ENCODE measurements at regions of chr14 and their contacts with region 1.

Region 1: DNA sequence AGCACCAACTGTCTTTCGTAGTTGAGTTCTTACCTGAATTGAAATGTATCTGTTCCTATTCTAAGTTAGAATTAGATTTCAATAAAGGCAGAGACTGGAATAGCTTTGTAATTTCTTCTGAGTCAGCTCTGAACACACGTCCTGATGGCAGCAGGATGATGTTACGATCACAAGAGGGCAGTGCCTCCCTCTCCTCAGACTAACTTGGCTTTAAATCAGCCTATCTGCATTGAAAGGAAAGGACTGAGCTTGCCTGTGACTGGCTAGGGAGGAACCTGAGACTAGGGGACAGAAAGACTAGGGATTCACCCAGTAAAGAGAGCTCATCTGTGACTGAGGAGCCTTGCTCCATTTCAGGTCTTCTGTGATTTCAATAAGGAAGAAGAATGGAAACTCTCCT is 323.7 kb upstream of the OR4E1 start:
- DNase-seq: peak; percentile 33 to 58 (median 52)
- H3K4me3 ChIP-seq: peak overlapping the region in 1 of 2 donors; percentile 27
- H3K4me3 Mint-ChIP-seq: peak overlapping the region; percentile 87 to 96 (median 92)
- H3K27ac ChIP-seq: peak overlapping the region; percentile 51
- H3K27ac Mint-ChIP-seq: peak overlapping the region in 6 of 7 donors; percentile 86 to 97 (median 92)
- H3K4me1 ChIP-seq: peaks cover 18% of the 10 kb centered on the region
- H3K4me1 Mint-ChIP-seq: peaks cover 5 to 15% (median 8%) of the 10 kb centered on the region in 4 donors
- H3K27me3 ChIP-seq: no peaks in the 10 kb centered on the region
- H3K27me3 Mint-ChIP-seq: no peaks in the 10 kb centered on the region

Region 2: GRCh38 chr14:22039938-22040775 is 42.9 kb after region 1 on chr14:
- CTCF ChIA-PET with region 1: interaction called, 4 read pairs
- POLR2A ChIA-PET with region 1: interaction called, 11 read pairs
- intact Hi-C with region 1: no loop called
- DNase-seq: peak; percentile 38 to 56 (median 44)
- H3K4me3 ChIP-seq: peak overlapping the region in 1 of 2 donors; percentile 14
- H3K4me3 Mint-ChIP-seq: peak overlapping the region; percentile 40 to 82 (median 78)
- H3K27ac ChIP-seq: no peak overlapping the region
- H3K27ac Mint-ChIP-seq: peak overlapping the region; percentile 30 to 92 (median 80)
- H3K4me1 ChIP-seq: no peaks in the 10 kb centered on the region
- H3K4me1 Mint-ChIP-seq: peaks cover 2 to 11% (median 4%) of the 10 kb centered on the region in 4 donors
- H3K27me3 ChIP-seq: no peaks in the 10 kb centered on the region
- H3K27me3 Mint-ChIP-seq: no peaks in the 10 kb centered on the region

Measured in CD4-positive, alpha-beta memory T cell (primary cell).